OCI-LY7 (cell line): ENCODE measurements at regions of chr17 and their contacts with region 1.

Region 1: GRCh38 chr17:82698065-82698973 is at the start of gene RAB40B:
- DNase-seq: peak; percentile 100
- H3K4me3 ChIP-seq: peak within 1 kb of the TSS; percentile 71
- H3K27ac ChIP-seq: no peak within 1 kb of the TSS
- H3K4me1 ChIP-seq: peaks cover 7% of the 10 kb centered on the region
- CTCF ChIP-seq: no peak
- total RNA-seq, gene RAB40B: 10.1 and 22.1 TPM in 2 replicates

Region 2: GRCh38 chr17:82565551-82565950 is 132.8 kb before region 1 on chr17:
- CTCF ChIA-PET with region 1: no interaction called
- POLR2A ChIA-PET with region 1: no interaction called
- intact Hi-C with region 1: no loop called
- DNase-seq: no peak
- H3K4me3 ChIP-seq: no peak overlapping the region
- H3K27ac ChIP-seq: no peak overlapping the region
- H3K4me1 ChIP-seq: no peaks in the 10 kb centered on the region
- CTCF ChIP-seq: no peak

Region 3: DNA sequence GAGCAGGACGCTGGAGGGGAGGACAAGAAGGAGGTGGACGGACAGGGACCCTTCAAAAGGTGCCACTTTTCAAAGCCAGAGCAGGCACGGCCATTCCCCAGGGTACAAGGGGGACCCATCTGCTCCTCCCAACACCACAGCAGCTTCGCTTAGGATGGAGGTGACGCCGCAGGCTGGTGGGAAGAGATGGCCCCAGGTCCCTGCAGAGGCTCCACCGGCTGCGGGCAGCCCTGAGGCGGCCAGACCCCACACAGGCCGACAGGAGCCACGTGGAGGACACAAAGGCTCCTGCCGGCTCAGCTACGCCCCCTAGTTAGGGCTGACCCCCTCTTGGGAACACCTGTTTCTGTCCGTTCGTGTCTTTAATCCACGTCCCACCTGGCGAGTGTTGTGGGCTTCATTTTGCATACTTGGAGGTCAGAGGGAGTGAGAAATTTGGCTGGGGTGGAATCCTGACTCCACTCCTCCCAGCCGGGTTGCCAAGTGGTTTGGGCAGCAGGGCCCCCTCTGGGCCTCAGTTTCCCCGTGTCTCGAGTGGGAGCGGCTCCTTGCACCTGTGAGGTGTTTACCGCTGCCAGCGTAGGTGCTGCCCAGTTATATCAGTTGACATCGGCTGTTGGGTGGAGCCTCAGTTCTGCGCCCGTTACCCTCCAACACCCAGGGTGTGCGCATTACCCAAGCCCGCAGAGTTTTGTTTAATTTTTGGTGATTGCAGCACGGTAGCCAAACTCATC is 12.3 kb after region 1 on chr17:
- CTCF ChIA-PET with region 1: no interaction called
- POLR2A ChIA-PET with region 1: interaction called, 4 read pairs
- intact Hi-C with region 1: loop called (anchors 1 kb)
- DNase-seq: peak; percentile 38
- H3K4me3 ChIP-seq: no peak overlapping the region
- H3K27ac ChIP-seq: no peak overlapping the region
- H3K4me1 ChIP-seq: peaks cover 34% of the 10 kb centered on the region
- CTCF ChIP-seq: peak; percentile 68